PC-9 (cell line): ENCODE measurements at regions of chr3 and their contacts with region 1.

Region 1: GRCh38 chr3:184711493-184712247 is at the start of gene MAGEF1:
- DNase-seq: peak; percentile 81 to 96
- H3K4me3 ChIP-seq: peak within 1 kb of the TSS; percentile 91
- H3K27ac ChIP-seq: peak within 1 kb of the TSS; percentile 79
- H3K4me1 ChIP-seq: peaks cover 21% of the 10 kb centered on the region
- H3K27me3 ChIP-seq: no peaks in the 10 kb centered on the region
- CTCF ChIP-seq: no peak
- total RNA-seq, gene MAGEF1: 97.2 and 106 TPM in 2 replicates

Region 2: DNA sequence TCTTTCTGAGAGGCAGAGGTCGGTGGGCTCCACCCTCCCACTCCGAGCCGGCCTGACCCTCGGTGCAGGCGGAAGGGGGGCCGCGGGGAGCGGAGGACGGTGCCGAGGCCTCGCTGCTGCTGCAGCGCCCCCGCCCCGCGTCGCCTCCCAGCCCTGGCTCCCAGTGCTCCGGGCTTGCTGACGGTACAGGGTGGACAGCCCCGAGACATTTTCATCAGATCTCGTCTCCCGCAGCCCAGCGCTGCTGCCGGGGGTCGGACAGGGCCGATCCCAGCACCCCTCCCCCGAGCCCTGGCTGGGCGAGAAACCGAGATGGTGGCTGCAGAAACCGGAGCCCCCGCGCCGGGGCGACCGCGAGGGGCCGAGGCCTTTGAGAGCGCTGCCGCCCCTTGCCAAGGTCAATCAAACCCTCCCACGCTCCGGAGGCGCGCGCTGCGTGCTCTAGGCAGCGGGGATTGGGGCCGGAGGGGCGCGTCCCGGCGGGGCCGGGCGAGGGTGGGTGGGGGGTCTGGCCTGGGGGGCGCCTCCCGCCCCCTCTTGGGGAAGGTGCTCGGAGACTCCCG is 107.5 kb before region 1 on chr3:
- CTCF ChIA-PET with region 1: no interaction called
- POLR2A ChIA-PET with region 1: no interaction called
- intact Hi-C with region 1: no loop called
- DNase-seq: no peak
- H3K4me3 ChIP-seq: no peak overlapping the region
- H3K27ac ChIP-seq: no peak overlapping the region
- H3K4me1 ChIP-seq: peaks cover 17% of the 10 kb centered on the region
- H3K27me3 ChIP-seq: peaks cover 27% of the 10 kb centered on the region; the same call in 1 of the 2 replicates
- CTCF ChIP-seq: no peak

Region 3: DNA sequence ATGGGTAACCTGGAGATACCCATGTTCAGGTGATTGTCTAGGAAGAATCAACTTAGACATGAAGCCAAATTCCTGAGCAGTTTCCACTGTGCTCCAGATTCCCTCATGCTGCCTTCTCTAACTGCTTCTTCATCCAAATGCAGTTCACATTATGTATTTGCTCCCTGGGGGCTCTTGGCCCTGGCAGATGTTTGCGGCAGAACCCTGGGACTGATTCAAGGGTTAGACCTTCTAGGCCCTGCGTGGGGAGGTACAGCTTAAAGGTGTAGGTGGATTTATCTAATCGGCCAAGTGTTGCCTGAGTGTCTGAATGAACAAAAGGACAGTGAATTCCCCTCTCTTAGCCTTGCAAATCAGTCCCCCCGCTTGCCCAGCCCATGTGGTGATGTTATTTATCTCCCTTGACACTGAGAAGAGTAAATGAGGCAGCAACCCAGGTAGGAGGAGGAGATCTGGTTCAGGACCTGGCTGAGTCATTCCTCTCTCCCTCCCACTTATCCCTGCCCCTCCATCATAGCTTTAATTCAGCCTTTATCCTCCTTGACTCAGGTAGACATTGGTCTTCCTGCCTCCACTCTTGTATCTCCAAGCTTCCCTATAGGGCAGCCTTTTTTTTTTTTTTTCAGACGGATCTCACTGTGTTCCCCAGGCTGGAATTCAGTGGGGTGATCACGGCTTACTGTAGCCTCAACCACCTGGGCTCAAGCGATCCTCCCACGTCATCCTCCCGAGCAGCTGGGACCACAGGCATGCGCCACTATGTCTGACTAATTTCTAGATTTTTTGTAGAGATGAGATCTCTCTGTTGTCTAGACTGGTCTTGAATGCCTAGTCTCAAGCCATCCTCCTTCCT is 54.6 kb before region 1 on chr3:
- CTCF ChIA-PET with region 1: no interaction called
- POLR2A ChIA-PET with region 1: interaction called, 10 read pairs
- intact Hi-C with region 1: loop called (anchors 1 kb)
- DNase-seq: peak in 1 of 2 experiments; percentile 78
- H3K4me3 ChIP-seq: no peak overlapping the region
- H3K27ac ChIP-seq: no peak overlapping the region
- H3K4me1 ChIP-seq: peaks cover 38% of the 10 kb centered on the region
- H3K27me3 ChIP-seq: no peaks in the 10 kb centered on the region
- CTCF ChIP-seq: no peak